ENCODE measurements at regions of chr2 and their contacts with region 1.

Region 1: GRCh38 chr2:231674587-231675338 is 33.6 kb upstream of the PTMA start:
- H3K4me3 ChIP-seq: no peak overlapping the region
- H3K27ac ChIP-seq: no peak overlapping the region
- H3K4me1 ChIP-seq: no peaks in the 10 kb centered on the region
- CTCF ChIP-seq: peak; percentile 82

Region 2: GRCh38 chr2:231612179-231613053 is 62.3 kb before region 1 on chr2:
- CTCF ChIA-PET with region 1: interaction called, 231 read pairs
- POLR2A ChIA-PET with region 1: interaction called, 5 read pairs
- H3K4me3 ChIP-seq: no peak overlapping the region
- H3K27ac ChIP-seq: no peak overlapping the region
- H3K4me1 ChIP-seq: no peaks in the 10 kb centered on the region; the same call in 1 of the 2 replicates
- CTCF ChIP-seq: peak; percentile 93

Region 3: GRCh38 chr2:231642631-231643494 is 31.9 kb before region 1 on chr2:
- CTCF ChIA-PET with region 1: interaction called, 139 read pairs
- POLR2A ChIA-PET with region 1: interaction called, 7 read pairs
- H3K4me3 ChIP-seq: peak overlapping the region; percentile 13; the same call in 1 of the 2 replicates
- H3K27ac ChIP-seq: no peak overlapping the region
- H3K4me1 ChIP-seq: no peaks in the 10 kb centered on the region
- CTCF ChIP-seq: no peak

Region 4: GRCh38 chr2:231662028-231662810 is 12.5 kb before region 1 on chr2:
- CTCF ChIA-PET with region 1: interaction called, 48 read pairs
- POLR2A ChIA-PET with region 1: interaction called, 14 read pairs
- H3K4me3 ChIP-seq: no peak overlapping the region
- H3K27ac ChIP-seq: peak overlapping the region; percentile 13; the same call in 1 of the 2 replicates
- H3K4me1 ChIP-seq: 0 out of 2 replicates have a peak, but pooled peaks cover 3% of the 10 kb centered on the region
- CTCF ChIP-seq: no peak

Region 5: DNA sequence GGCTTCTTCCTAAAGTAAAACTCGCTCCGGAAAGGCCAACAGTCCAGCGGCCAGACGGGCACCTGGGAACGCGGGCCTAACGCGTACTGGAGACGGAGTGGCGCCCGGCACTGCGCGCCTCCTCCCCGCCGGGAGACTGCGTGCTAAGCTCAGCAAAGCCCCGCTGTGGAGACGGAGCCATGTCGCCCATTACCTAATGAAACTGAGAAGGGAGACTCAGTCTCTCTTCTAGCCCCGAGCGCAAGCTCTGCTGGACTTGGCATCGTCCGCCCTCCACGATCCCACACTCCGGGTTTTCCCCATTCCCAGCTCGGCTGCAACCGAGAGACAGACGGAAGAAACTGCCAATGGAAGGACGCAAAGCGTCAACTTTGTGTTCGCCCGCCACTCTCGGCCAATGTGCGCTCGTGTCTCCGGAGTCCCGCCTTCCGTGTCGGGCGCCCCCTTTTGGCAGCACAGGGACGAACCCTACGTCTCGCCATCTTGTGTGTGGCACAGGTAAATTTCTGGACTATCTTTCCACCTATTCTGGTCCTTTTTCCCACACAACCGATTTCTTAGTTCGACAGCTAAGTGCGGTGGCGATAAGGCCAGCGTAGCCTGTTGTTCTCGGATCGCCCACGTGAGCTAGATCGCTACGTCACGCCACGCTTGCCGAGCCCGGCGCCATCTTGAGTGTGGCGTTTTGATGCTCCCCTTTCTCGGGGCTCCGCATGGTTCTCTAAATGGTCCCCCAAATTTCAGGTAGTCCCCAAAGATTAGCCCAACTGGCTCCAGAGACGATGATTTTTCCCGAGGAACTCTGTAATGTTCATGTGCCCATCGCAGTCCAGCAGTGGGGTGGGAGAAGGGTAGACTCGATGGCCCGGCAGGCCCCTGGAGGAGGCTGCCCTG is 32.2 kb after region 1 on chr2:
- CTCF ChIA-PET with region 1: interaction called, 17 read pairs
- POLR2A ChIA-PET with region 1: interaction called, 10 read pairs
- H3K4me3 ChIP-seq: peak overlapping the region; percentile 82
- H3K27ac ChIP-seq: peak overlapping the region; percentile 98
- H3K4me1 ChIP-seq: peaks cover 1% of the 10 kb centered on the region
- CTCF ChIP-seq: peak; percentile 100

Measured in HEK293 (cell line).